Caco-2 (cell line): ENCODE measurements at regions of chr4 and their contacts with region 1.

Region 1: DNA sequence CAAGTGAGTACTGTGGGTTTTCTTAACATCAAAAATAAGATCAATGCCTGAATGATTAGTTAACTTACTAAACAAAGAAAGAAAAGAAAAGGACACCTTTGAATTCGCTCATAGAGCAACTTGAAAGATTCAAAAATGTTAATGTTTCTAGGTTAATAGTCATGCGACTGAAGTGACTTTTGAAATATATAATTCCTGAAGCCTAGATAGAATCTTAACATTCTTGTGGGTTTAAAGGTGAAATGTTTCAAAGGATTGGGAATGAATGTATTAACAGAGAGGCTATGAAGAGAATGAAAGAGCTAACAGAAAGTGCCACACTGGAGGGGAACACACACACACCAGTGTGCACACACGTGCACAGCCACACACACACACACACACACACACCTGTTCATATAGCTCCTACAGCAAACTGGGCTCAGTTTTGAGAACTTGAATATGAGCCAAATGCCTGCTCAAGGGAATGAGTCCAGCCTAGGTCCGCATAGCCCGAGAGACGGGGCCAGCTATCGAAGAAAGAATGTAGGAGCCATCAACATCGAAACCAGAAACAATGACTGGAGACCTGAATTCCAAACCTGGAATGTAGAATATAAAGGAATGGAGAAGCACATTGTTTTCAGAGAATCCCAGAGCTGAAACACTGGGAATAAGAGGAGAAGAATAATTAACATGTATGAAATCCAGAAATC is 37.4 kb upstream of the ERVMER34-1 start:
- DNase-seq: peak; percentile 35 to 40
- H3K4me3 ChIP-seq: no peak overlapping the region
- H3K4me3 Mint-ChIP-seq: no peak overlapping the region
- H3K27ac Mint-ChIP-seq: peak overlapping the region; percentile 45
- H3K4me1 ChIP-seq: 0 out of 2 replicates have a peak, but pooled peaks cover 6% of the 10 kb centered on the region
- H3K4me1 Mint-ChIP-seq: peaks cover 9% of the 10 kb centered on the region
- H3K27me3 ChIP-seq: no peaks in the 10 kb centered on the region
- H3K27me3 Mint-ChIP-seq: no peaks in the 10 kb centered on the region
- CTCF ChIP-seq: no peak

Region 2: DNA sequence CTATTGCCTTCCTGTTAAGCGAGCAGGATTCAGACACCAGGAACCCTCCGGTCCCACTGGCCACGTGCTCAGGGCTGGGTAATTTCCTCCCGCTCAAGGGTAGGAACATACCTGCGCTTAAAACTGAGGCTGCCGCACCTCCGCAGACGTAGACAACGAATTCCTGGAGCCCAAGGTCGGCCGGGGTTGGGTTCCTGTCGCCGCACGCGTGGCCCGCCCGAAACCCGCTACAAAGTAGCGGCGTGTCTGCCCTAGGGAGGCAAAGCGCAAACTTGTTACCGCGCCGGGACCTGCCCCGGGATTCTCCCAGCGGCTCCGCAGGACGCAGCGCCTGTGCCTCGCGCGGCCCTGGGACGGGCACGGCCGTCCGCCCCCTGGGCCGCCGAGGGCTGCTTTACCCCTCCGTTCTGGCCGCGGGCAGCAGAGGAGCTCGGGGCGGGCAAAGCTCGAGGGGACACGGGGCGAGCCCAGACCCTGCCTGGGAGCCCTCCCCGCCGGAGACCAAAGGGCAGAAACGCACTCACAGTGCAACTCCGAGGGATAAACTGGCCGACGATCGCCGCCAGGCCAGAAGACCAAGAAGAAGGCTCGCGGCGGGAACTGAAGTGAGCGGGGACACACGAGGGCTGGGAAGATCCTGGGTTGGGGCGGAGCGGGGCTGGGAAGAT is 37.7 kb before region 1 on chr4 and contains the start of gene ERVMER34-1:
- CTCF ChIA-PET with region 1: no interaction called
- POLR2A ChIA-PET with region 1: no interaction called
- intact Hi-C with region 1: no loop called
- DNase-seq: peak in 1 of 2 experiments; percentile 53
- H3K4me3 ChIP-seq: peak within 1 kb of the TSS; percentile 77
- H3K4me3 Mint-ChIP-seq: peak within 1 kb of the TSS; percentile 98
- H3K27ac Mint-ChIP-seq: peak within 1 kb of the TSS; percentile 91
- H3K4me1 ChIP-seq: peaks cover 8% of the 10 kb centered on the region; the same call in 1 of the 2 replicates
- H3K4me1 Mint-ChIP-seq: peaks cover 10% of the 10 kb centered on the region
- H3K27me3 ChIP-seq: no peaks in the 10 kb centered on the region
- H3K27me3 Mint-ChIP-seq: no peaks in the 10 kb centered on the region
- CTCF ChIP-seq: no peak
- total RNA-seq, gene ERVMER34-1: 73.3 and 85.6 TPM in 2 replicates

Region 3: DNA sequence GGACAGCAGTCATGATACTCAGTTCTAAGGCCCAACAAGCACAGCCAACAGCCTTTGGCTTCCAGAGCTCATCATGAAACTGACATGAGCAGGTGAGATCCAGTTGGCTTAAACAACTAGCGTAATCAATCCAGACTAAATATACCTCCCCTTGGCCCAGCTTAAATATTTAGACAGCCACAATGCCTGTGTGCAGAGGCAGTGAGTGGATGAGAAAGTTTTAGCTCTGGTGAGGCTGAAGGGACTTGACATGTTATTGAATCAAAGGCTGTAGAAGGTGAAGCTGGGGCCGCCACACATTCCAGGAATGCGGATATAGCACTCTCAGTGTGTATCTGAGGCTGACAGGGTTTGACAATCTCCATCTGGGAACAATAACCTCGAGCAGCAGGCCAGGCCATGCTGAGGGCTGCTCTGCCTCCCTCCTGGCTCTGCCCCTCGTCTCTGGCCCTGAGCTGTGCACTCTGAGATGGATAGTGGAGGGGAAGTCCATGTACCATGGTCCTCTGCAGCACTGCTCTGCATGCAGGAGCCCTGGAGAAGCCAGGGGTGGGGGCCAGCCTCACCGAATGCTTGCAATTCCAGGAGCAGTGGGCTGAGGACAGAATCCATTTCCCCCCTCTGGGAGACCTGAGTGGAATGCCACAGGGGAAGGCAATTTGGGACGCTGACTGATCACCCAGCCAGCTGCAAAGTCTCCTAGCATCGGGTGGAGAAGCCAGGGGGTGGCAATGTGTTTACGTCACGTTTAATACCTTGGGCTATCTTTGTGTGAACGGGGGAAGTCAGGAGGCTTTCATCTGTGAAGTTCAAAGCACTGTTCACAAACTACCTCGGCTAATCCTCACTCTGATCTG is 36.2 kb after region 1 on chr4:
- CTCF ChIA-PET with region 1: no interaction called
- POLR2A ChIA-PET with region 1: no interaction called
- intact Hi-C with region 1: loop called (anchors 2 kb)
- DNase-seq: peak; percentile 51 to 72
- H3K4me3 ChIP-seq: no peak overlapping the region
- H3K4me3 Mint-ChIP-seq: peak overlapping the region; percentile 31
- H3K27ac Mint-ChIP-seq: peak overlapping the region; percentile 63
- H3K4me1 ChIP-seq: peaks cover 34% of the 10 kb centered on the region
- H3K4me1 Mint-ChIP-seq: peaks cover 6% of the 10 kb centered on the region
- H3K27me3 ChIP-seq: no peaks in the 10 kb centered on the region
- H3K27me3 Mint-ChIP-seq: no peaks in the 10 kb centered on the region
- CTCF ChIP-seq: no peak

Region 4: GRCh38 chr4:52853351-52853750 is 64.7 kb after region 1 on chr4:
- CTCF ChIA-PET with region 1: no interaction called
- POLR2A ChIA-PET with region 1: no interaction called
- intact Hi-C with region 1: no loop called
- DNase-seq: no peak
- H3K4me3 ChIP-seq: no peak overlapping the region
- H3K4me3 Mint-ChIP-seq: no peak overlapping the region
- H3K27ac Mint-ChIP-seq: no peak overlapping the region
- H3K4me1 ChIP-seq: peaks cover 36% of the 10 kb centered on the region
- H3K4me1 Mint-ChIP-seq: peaks cover 25% of the 10 kb centered on the region
- H3K27me3 ChIP-seq: no peaks in the 10 kb centered on the region
- H3K27me3 Mint-ChIP-seq: no peaks in the 10 kb centered on the region
- CTCF ChIP-seq: no peak

Region 5: GRCh38 chr4:53015681-53016080 is 227.0 kb after region 1 on chr4:
- CTCF ChIA-PET with region 1: no interaction called
- POLR2A ChIA-PET with region 1: no interaction called
- intact Hi-C with region 1: no loop called
- DNase-seq: peak in 1 of 2 experiments; percentile 44
- H3K4me3 ChIP-seq: no peak overlapping the region
- H3K4me3 Mint-ChIP-seq: no peak overlapping the region
- H3K27ac Mint-ChIP-seq: no peak overlapping the region
- H3K4me1 ChIP-seq: peaks cover 38% of the 10 kb centered on the region
- H3K4me1 Mint-ChIP-seq: peaks cover 13% of the 10 kb centered on the region
- H3K27me3 ChIP-seq: no peaks in the 10 kb centered on the region
- H3K27me3 Mint-ChIP-seq: no peaks in the 10 kb centered on the region
- CTCF ChIP-seq: peak; percentile 70 to 74